ENCODE measurements at regions of chr1 and their contacts with region 1.

Region 1: DNA sequence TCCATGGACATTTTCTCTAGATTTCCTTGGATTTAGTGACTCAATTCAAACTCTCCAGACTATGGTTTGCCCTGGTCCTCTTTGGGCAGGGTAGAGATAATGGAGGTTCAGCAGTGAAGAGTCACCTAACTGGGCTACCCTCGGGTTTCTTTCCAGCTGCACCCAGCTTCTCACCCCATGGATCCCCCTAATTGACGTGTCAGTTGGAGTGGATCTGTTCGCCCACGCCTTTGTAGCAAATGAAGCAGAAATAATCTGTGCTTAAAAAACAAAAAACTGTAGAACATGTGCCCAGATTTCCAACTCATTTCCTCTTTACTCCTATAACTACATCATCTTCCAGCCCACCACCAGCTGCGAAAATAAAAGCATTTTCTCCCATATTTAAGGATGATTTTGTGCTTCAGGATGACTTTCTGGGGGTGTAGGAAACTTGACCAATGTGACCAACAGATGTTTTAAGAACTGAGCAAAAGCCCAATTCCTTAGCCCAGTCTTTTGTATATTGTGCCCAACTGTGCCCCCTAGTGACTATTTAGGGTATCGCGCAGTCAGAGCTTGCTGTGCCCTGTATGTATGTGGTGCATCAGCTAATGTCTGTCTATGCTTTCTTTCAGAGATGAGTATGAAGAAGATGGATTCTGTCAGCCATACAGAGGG is 66.5 kb upstream of the UBE2U start:
- DNase-seq: peak; percentile 68
- ATAC-seq: peak; percentile 80
- H3K4me3 ChIP-seq: no peak overlapping the region
- H3K4me3 Mint-ChIP-seq: no peak overlapping the region
- H3K27ac ChIP-seq: no peak overlapping the region
- H3K27ac Mint-ChIP-seq: no peak overlapping the region
- H3K4me1 ChIP-seq: no peaks in the 10 kb centered on the region
- H3K4me1 Mint-ChIP-seq: peaks cover 2% of the 10 kb centered on the region
- H3K27me3 ChIP-seq: peaks cover 0 to 4% (median 0%) of the 10 kb centered on the region in 4 experiments
- H3K27me3 Mint-ChIP-seq: peaks cover 15% of the 10 kb centered on the region
- CTCF ChIP-seq: peak; percentile 87

Region 2: DNA sequence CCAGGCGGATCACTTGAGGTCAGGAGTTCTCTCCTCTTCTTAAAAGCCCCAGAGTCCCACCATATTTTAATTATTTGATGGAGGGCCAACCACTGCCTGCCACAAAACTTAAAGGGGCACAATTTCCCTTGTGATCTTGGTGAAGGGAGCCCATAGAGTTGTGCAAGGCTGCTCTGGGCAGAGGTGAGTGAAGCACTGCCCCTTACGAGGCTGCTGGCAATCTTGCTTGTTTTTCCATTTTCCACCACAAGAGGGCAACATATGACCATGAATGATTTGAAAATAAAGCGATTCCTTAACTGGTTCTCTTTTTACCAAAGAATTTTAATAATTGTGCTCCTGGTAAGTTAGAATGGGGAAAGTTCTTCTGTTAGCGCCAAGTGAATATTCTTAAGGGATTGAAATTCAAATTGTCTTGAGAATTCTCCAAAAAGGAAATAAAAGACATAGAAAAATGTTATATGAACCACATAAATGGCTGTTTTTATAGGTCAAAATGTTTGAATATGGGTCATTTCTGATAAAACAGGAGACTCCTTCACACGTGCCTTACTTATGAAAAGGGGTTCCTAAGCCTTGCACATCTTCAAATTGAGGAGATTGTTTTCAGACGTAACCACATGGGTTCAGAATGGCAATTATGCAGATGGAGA is 521.0 kb before region 1 on chr1:
- CTCF ChIA-PET with region 1: interaction called, 29 read pairs
- POLR2A ChIA-PET with region 1: no interaction called
- intact Hi-C with region 1: loop called (anchors 1 kb)
- DNase-seq: peak; percentile 80
- ATAC-seq: peak; percentile 71
- H3K4me3 ChIP-seq: no peak overlapping the region
- H3K4me3 Mint-ChIP-seq: no peak overlapping the region
- H3K27ac ChIP-seq: no peak overlapping the region
- H3K27ac Mint-ChIP-seq: no peak overlapping the region
- H3K4me1 ChIP-seq: no peaks in the 10 kb centered on the region
- H3K4me1 Mint-ChIP-seq: no peaks in the 10 kb centered on the region
- H3K27me3 ChIP-seq: no peaks in the 10 kb centered on the region
- H3K27me3 Mint-ChIP-seq: no peaks in the 10 kb centered on the region
- CTCF ChIP-seq: peak; percentile 91

Region 3: DNA sequence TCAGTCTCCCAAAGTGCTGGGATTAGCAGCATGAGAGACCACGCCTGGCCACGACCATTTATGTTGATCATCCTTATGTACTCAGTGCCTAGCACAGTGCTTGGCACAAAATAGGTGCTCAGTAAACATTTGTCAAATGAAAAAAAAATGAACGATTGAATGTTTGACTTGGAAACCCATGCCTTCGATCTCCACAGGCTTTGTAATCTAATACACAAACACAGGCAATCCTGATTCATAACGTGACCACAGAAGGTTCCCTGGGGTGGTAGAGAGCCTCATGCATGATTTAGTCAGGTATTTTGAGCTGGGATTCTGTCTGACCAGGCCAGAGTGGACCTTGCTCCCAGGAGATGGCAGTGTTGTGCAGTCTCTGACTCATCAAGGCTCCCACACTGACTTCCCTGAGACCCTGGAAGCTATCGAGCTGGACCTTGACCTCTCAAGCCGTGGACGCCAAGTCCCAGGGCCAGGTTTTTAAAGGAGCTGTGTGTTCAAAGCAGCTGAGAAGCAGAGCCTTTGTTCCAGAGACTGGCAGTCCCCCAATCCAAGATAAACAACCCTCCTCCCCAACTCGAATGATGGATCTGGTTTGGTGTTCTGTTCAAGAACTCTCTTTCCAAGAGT is 462.5 kb before region 1 on chr1:
- CTCF ChIA-PET with region 1: interaction called, 27 read pairs
- POLR2A ChIA-PET with region 1: no interaction called
- intact Hi-C with region 1: no loop called
- DNase-seq: no peak
- ATAC-seq: no peak
- H3K4me3 ChIP-seq: no peak overlapping the region
- H3K4me3 Mint-ChIP-seq: no peak overlapping the region
- H3K27ac ChIP-seq: no peak overlapping the region
- H3K27ac Mint-ChIP-seq: no peak overlapping the region
- H3K4me1 ChIP-seq: no peaks in the 10 kb centered on the region
- H3K4me1 Mint-ChIP-seq: no peaks in the 10 kb centered on the region
- H3K27me3 ChIP-seq: no peaks in the 10 kb centered on the region
- H3K27me3 Mint-ChIP-seq: no peaks in the 10 kb centered on the region
- CTCF ChIP-seq: no peak

Region 4: GRCh38 chr1:63773815-63774616 is 362.9 kb before region 1 on chr1 and contains the start of gene ROR1:
- CTCF ChIA-PET with region 1: interaction called, 17 read pairs
- POLR2A ChIA-PET with region 1: no interaction called
- intact Hi-C with region 1: no loop called
- DNase-seq: peak; percentile 72
- ATAC-seq: peak; percentile 90
- H3K4me3 ChIP-seq: peak within 1 kb of the TSS; percentile 42 to 72 (median 53)
- H3K4me3 Mint-ChIP-seq: peak within 1 kb of the TSS; percentile 86
- H3K27ac ChIP-seq: no peak within 1 kb of the TSS
- H3K27ac Mint-ChIP-seq: peak within 1 kb of the TSS; percentile 42
- H3K4me1 ChIP-seq: peaks cover 12 to 21% of the 10 kb centered on the region in 2 donors
- H3K4me1 Mint-ChIP-seq: peaks cover 20% of the 10 kb centered on the region
- H3K27me3 ChIP-seq: peaks cover 0 to 31% (median 25%) of the 10 kb centered on the region in 4 experiments
- H3K27me3 Mint-ChIP-seq: peaks cover 55% of the 10 kb centered on the region
- CTCF ChIP-seq: peak; percentile 43
- total RNA-seq, gene ROR1: 16.0 and 16.3 TPM in 2 replicates

Region 5: GRCh38 chr1:64147759-64148158 is 10.9 kb after region 1 on chr1:
- CTCF ChIA-PET with region 1: interaction called, 42 read pairs
- POLR2A ChIA-PET with region 1: no interaction called
- intact Hi-C with region 1: no loop called
- DNase-seq: no peak
- ATAC-seq: no peak
- H3K4me3 ChIP-seq: no peak overlapping the region
- H3K4me3 Mint-ChIP-seq: no peak overlapping the region
- H3K27ac ChIP-seq: no peak overlapping the region
- H3K27ac Mint-ChIP-seq: no peak overlapping the region
- H3K4me1 ChIP-seq: no peaks in the 10 kb centered on the region
- H3K4me1 Mint-ChIP-seq: no peaks in the 10 kb centered on the region
- H3K27me3 ChIP-seq: no peaks in the 10 kb centered on the region
- H3K27me3 Mint-ChIP-seq: peaks cover 16% of the 10 kb centered on the region
- CTCF ChIP-seq: no peak